Mammary epithelial cell (primary cell): ENCODE measurements at regions of chrX and their contacts with region 1.

Region 1: DNA sequence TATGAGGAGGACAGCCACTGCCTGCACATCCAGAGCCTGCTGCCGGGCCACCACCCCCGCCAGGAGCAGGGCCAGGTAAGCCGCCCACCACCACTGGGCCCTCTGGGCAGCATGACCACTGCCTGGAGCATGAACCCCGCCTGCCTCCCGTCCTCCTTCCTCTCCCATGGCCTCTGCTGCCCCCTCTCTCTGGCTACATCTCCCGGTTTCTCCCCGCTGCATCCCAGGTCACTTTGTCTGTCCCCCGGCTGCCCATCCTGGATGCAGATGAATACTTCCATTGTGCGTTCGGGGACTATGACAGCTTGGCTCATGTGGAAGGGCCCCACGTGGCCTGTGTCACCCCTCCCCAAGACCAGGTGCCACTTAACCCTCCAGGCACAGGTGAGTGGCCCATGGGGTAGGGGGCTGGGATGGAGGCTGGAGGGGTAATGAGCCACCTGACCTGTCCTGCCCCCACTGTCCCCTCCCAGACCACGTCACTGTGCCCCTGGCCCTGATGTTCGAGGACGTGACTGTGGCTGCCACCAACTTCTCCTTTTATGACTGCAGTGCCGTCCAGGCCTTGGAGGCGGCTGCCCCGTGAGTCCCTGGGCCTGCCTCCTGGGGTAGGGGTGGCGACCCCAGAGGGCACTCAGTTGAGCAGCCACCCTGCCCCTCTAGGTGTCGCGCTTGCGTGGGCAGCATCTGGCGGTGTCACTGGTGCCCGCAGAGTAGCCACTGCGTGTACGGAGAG is 6.0 kb downstream of the PLXNB3 start:
- DNase-seq: no peak
- H3K4me3 ChIP-seq: no peak overlapping the region
- H3K27ac ChIP-seq: no peak overlapping the region
- H3K4me1 ChIP-seq: peaks cover 20% of the 10 kb centered on the region
- H3K27me3 ChIP-seq: no peaks in the 10 kb centered on the region
- CTCF ChIP-seq: no peak

Region 2: DNA sequence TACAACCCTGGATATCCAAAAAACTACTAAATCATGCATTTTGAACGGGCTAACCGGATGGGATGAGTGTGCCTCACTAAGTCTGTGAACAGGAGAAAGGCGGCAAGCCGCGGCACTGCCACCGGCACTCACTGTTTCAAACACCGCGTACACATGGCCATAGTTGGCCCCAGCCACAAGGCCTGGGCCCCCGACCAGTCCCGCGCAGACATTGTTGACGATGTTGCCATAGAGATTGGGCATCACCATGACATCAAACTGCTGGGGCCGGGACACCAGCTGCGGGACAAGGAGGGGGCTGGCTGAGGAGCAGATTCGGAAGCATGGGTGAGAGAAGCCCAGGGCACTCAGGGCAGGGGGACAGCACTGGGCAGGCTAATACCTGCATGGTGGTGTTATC is 16.6 kb after region 1 on chrX:
- CTCF ChIA-PET with region 1: no interaction called
- dilution Hi-C with region 1: no loop called
- in situ Hi-C with region 1: no loop called
- intact Hi-C with region 1: no loop called
- DNase-seq: no peak
- H3K4me3 ChIP-seq: no peak overlapping the region
- H3K27ac ChIP-seq: no peak overlapping the region
- H3K4me1 ChIP-seq: peaks cover 5% of the 10 kb centered on the region
- H3K27me3 ChIP-seq: no peaks in the 10 kb centered on the region
- CTCF ChIP-seq: no peak

Region 3: DNA sequence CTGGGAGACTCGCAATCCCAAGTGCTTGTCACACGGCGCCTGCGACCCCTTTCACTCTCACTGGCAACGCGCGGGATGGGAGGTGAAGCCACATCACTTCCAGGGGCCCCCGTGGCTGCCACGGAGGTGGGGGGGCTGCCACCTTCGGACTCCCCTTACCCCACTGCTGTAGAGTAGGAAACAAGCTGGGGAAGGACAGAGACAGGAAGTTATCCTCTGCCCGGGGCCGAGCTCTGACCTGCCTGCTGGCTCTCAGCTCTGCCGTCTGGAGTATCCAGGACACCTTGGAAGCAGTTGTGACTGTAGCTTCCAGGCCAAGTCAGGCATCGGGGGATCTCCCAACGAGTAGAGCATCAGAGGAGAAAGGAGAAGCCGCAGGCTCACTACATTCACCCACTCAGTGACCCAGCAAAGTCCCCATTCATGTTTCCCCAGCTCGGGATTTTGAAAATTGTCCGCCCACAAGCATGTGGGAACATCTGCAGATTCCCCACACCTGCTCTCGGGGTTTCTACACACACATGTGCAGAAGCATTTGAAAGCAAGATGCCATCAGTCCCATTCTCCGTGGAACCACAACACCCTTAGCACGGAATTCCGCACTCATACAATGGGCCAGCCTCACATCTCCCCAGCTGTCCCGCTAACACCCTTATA is 49.5 kb after region 1 on chrX:
- CTCF ChIA-PET with region 1: no interaction called
- dilution Hi-C with region 1: loop called (anchors 5 kb)
- in situ Hi-C with region 1: no loop called
- intact Hi-C with region 1: no loop called
- DNase-seq: no peak
- H3K4me3 ChIP-seq: peak overlapping the region in 2 of 3 experiments; percentile 16 to 21
- H3K27ac ChIP-seq: no peak overlapping the region
- H3K4me1 ChIP-seq: peaks cover 3% of the 10 kb centered on the region
- H3K27me3 ChIP-seq: no peaks in the 10 kb centered on the region
- CTCF ChIP-seq: no peak

Region 4: GRCh38 chrX:153909024-153909970 is 139.3 kb after region 1 on chrX:
- CTCF ChIA-PET with region 1: no interaction called
- dilution Hi-C with region 1: no loop called
- in situ Hi-C with region 1: no loop called
- intact Hi-C with region 1: no loop called
- DNase-seq: no peak
- H3K4me3 ChIP-seq: no peak overlapping the region
- H3K27ac ChIP-seq: no peak overlapping the region
- H3K4me1 ChIP-seq: no peaks in the 10 kb centered on the region
- H3K27me3 ChIP-seq: no peaks in the 10 kb centered on the region
- CTCF ChIP-seq: no peak